Activated CD8-positive, alpha-beta T cell treated with anti-CD3 and anti-CD28 coated beads, Interleukin-2, amount 10 ng/mL, durations not matched to agents 7 days and 5 days (primary cell): ENCODE measurements at regions of chr14 and their contacts with region 1.

Region 1: GRCh38 chr14:23588884-23589598 is 10.5 kb upstream of the JPH4 start:
- DNase-seq: peak; percentile 88
- ATAC-seq: peak; percentile 99
- H3K4me3 Mint-ChIP-seq: no peak overlapping the region
- H3K27ac Mint-ChIP-seq: no peak overlapping the region
- H3K4me1 Mint-ChIP-seq: peaks cover 11% of the 10 kb centered on the region
- H3K27me3 Mint-ChIP-seq: peaks cover 11% of the 10 kb centered on the region

Region 2: DNA sequence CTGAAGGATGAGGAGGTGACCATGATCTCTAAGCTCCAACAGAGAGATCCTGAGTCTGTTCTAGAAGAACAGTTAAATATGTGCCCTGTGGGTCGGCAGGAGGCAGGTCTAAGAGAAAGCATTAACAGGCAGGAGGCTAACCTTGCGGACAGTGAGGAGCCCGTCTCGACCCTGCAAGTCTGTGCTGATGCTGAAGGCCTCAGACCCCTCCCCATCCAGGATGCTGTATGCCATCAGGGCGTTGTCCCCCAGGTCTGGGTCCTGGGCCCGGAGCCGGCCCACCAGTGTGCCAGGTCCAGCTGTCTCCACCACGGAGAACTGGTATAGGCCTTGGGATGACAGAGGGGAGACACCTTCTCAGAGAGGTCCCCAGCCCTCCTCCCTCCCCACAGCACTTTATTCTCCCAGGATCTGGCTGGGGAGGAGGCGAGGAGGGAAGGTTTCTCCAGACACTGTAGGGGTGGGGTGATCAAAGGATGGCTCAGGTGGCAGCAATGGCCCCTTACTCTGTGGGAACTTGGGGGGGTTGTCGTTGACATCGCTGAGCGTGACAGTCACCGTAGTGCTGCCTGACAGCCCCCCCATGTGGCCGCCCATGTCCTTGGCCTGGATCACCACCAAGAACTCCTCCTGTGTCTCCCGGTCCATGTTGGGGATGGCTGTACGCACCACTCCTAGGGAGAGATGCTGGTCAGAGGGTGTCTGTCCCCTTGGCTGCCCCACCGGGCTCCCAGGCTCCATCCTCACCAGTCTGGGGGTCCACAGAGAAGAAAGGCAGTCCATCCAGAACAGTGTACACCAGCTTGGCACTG is 534.8 kb before region 1 on chr14:
- CTCF ChIA-PET with region 1: no interaction called
- POLR2A ChIA-PET with region 1: no interaction called
- DNase-seq: peak; percentile 54
- ATAC-seq: no peak
- H3K4me3 Mint-ChIP-seq: no peak overlapping the region
- H3K27ac Mint-ChIP-seq: no peak overlapping the region
- H3K4me1 Mint-ChIP-seq: peaks cover 18% of the 10 kb centered on the region
- H3K27me3 Mint-ChIP-seq: peaks cover 9% of the 10 kb centered on the region

Region 3: GRCh38 chr14:23605931-23606585 is 17.0 kb after region 1 on chr14:
- CTCF ChIA-PET with region 1: interaction called, 23 read pairs
- POLR2A ChIA-PET with region 1: no interaction called
- DNase-seq: no peak
- ATAC-seq: no peak
- H3K4me3 Mint-ChIP-seq: no peak overlapping the region
- H3K27ac Mint-ChIP-seq: peak overlapping the region; percentile 13
- H3K4me1 Mint-ChIP-seq: peaks cover 42% of the 10 kb centered on the region
- H3K27me3 Mint-ChIP-seq: no peaks in the 10 kb centered on the region

Region 4: GRCh38 chr14:23613242-23614070 is 24.4 kb after region 1 on chr14:
- CTCF ChIA-PET with region 1: interaction called, 23 read pairs
- POLR2A ChIA-PET with region 1: no interaction called
- DNase-seq: no peak
- ATAC-seq: no peak
- H3K4me3 Mint-ChIP-seq: no peak overlapping the region
- H3K27ac Mint-ChIP-seq: no peak overlapping the region
- H3K4me1 Mint-ChIP-seq: peaks cover 31% of the 10 kb centered on the region
- H3K27me3 Mint-ChIP-seq: no peaks in the 10 kb centered on the region

Region 5: DNA sequence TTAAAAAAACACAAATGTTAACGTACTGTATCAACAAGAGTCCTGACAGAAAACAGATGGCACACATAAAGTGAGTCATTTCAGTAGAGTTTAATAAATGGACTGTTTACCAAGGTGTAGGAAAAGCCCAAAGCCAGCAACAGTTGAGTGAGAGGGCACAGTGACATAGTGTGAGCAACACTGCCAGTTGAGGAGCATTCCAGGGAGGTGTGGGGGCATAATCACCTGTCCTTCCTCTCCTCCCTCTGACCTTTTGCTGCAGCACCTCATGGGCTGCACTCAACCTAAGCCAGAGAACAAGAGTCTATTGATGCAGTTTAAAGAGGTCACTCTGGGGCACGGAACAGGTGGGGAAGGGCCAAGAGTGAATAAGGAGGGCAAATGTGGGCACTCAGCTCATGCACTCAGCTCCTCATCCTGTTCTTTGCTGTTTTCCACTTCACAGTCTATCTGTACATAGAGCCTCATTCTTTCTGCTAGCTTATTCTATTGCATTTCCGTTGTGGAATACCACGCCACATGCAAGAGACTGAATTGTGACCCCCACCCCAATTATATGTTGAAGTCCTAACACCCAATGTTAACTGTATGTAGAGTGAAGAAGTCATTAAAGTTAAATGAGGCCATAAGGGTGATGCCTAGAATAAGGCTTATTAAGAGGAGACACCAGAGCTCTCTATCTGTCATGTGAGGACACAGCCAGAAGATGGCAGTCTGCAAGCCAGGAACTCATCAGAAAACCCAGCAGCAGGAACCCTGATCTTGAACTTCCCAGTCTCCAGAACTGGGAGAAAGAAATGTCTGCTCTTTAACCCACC is 76.5 kb after region 1 on chr14:
- CTCF ChIA-PET with region 1: interaction called, 16 read pairs
- POLR2A ChIA-PET with region 1: no interaction called
- DNase-seq: peak; percentile 46
- ATAC-seq: no peak
- H3K4me3 Mint-ChIP-seq: no peak overlapping the region
- H3K27ac Mint-ChIP-seq: no peak overlapping the region
- H3K4me1 Mint-ChIP-seq: peaks cover 1% of the 10 kb centered on the region
- H3K27me3 Mint-ChIP-seq: peaks cover 11% of the 10 kb centered on the region

Region 6: DNA sequence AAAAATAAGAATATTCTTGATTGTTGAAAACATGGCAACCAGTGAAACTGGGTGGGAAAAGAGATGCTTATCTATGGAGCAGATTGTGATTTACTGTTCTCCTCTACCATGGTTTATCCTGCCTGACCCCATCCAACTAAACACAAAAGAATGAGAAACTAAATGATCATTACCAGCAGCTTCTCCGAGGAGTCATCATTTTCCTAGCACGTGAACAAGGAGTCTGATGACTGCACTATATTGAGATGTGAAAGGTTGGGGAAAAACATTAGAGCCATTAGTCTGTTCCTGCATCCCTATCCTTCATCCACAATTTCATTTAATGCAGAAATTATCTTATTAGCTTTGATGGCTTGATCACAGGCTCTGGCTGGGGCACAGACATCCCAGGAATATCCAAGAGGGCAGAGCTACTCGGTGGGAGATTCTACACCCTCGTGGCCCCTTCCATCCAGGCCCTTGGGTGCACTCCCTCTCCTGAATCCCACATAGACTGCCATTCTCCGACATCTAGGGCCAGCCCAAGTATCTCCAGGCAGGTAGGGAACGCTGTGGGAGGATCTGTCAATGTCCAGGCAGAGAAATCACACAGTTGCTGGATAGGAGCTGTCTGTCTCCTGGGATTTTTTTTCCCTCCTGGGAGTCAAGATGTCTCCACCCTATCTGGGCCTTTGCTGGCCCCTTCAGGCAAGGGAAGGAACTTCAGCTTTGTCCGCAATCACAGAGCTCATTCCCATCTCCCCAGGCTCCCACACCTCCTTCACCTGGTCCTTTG is 321.2 kb after region 1 on chr14:
- CTCF ChIA-PET with region 1: interaction called, 21 read pairs
- POLR2A ChIA-PET with region 1: no interaction called
- DNase-seq: peak; percentile 30
- ATAC-seq: peak; percentile 33
- H3K4me3 Mint-ChIP-seq: no peak overlapping the region
- H3K27ac Mint-ChIP-seq: no peak overlapping the region
- H3K4me1 Mint-ChIP-seq: no peaks in the 10 kb centered on the region
- H3K27me3 Mint-ChIP-seq: peaks cover 19% of the 10 kb centered on the region

Region 7: GRCh38 chr14:23929822-23930294 is 340.8 kb after region 1 on chr14:
- CTCF ChIA-PET with region 1: interaction called, 37 read pairs
- POLR2A ChIA-PET with region 1: no interaction called
- DNase-seq: peak; percentile 90
- ATAC-seq: peak; percentile 88
- H3K4me3 Mint-ChIP-seq: no peak overlapping the region
- H3K27ac Mint-ChIP-seq: no peak overlapping the region
- H3K4me1 Mint-ChIP-seq: no peaks in the 10 kb centered on the region
- H3K27me3 Mint-ChIP-seq: peaks cover 4% of the 10 kb centered on the region